ENCODE measurements at regions of chr3 and their contacts with region 1.

Region 1: DNA sequence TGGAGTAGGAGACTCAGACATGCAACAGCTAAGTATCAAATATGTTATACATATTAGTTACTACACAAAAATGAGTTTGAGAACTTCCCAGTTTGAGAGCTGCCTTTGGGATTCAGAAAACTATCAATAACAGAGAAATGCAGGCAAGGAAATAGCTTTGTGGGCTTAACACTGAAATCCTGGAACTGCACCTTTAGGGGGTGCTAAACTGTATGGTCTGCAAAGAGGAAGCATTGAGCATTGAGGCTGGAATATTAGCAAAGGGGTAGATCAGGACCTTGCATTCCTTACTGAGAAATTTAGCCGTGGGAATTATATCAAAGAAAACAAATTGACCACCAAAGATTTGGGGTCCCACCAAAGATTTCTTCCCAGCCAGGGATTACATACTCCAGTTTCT is 580.0 kb downstream of the ZNF385D start:
- DNase-seq: peak in 1 of 2 experiments; percentile 1
- H3K4me3 ChIP-seq: no peak overlapping the region
- H3K27ac ChIP-seq: no peak overlapping the region
- H3K4me1 ChIP-seq: peaks cover 0 to 3% (median 0%) of the 10 kb centered on the region in 4 experiments; a peak in 1 of 7 replicates
- H3K27me3 ChIP-seq: no peaks in the 10 kb centered on the region
- CTCF ChIP-seq: peak in 2 of 3 experiments; percentile 42 to 76; a peak in 3 of 4 replicates
- EP300 ChIP-seq: no peak
- POLR2A ChIP-seq: no peak
- RAD21 ChIP-seq: peak in 1 of 2 experiments; percentile 56; a peak in 2 of 4 replicates

Region 2: DNA sequence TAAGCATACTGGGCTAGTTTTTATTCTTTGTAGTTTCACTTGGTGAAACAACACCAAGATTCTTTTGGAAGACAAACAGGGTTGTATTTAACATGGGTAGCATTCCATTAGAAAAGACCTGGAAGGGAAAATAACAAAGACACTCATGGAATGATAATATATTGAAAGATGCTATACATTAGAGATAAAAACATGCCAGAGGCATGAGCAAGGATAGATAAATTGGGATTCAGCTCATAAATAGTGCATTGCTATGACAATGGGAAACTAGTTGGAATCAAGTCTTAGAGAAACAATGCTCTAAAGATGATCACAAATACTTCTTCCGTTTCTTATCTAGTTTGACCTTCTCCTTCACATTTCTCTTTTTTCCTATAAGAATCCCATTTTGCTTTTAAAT is 97.4 kb before region 1 on chr3:
- CTCF ChIA-PET with region 1: no interaction called
- POLR2A ChIA-PET with region 1: no interaction called
- DNase-seq: no peak
- H3K4me3 ChIP-seq: no peak overlapping the region
- H3K27ac ChIP-seq: no peak overlapping the region
- H3K4me1 ChIP-seq: no peaks in the 10 kb centered on the region
- H3K27me3 ChIP-seq: no peaks in the 10 kb centered on the region
- CTCF ChIP-seq: no peak
- EP300 ChIP-seq: no peak
- POLR2A ChIP-seq: no peak
- RAD21 ChIP-seq: no peak

Region 3: DNA sequence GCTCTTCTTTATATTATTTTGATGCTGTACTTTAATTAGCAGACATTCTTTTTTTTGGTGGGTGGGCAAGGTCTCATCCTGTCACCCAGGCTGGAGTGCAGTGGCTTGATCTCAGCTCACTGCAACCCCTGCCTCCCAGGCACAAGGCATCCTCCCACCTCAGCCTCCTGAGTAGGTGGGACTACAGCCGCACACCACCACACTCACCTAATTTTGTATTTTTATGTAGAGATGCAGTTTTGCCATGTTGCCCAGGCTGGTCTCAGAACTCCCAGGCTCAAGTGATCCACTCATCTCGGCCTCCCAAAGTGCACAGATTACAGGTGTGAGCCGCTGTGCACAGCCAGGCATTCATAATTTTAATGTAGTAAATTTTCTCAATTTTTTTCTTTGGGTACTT is 28.0 kb before region 1 on chr3:
- CTCF ChIA-PET with region 1: interaction called, 11 read pairs
- POLR2A ChIA-PET with region 1: no interaction called
- DNase-seq: no peak
- H3K4me3 ChIP-seq: no peak overlapping the region
- H3K27ac ChIP-seq: no peak overlapping the region
- H3K4me1 ChIP-seq: peaks cover 0 to 5% (median 2%) of the 10 kb centered on the region in 4 experiments; a peak in 3 of 7 replicates
- H3K27me3 ChIP-seq: no peaks in the 10 kb centered on the region
- CTCF ChIP-seq: no peak
- EP300 ChIP-seq: no peak
- POLR2A ChIP-seq: no peak
- RAD21 ChIP-seq: no peak

Region 4: GRCh38 chr3:21158861-21159542 is 12.0 kb before region 1 on chr3:
- CTCF ChIA-PET with region 1: interaction called, 23 read pairs
- POLR2A ChIA-PET with region 1: no interaction called
- DNase-seq: no peak
- H3K4me3 ChIP-seq: no peak overlapping the region
- H3K27ac ChIP-seq: no peak overlapping the region
- H3K4me1 ChIP-seq: no peaks in the 10 kb centered on the region
- H3K27me3 ChIP-seq: no peaks in the 10 kb centered on the region
- CTCF ChIP-seq: no peak
- EP300 ChIP-seq: no peak
- POLR2A ChIP-seq: no peak
- RAD21 ChIP-seq: no peak

Region 5: GRCh38 chr3:21185816-21186314 is 14.9 kb after region 1 on chr3:
- CTCF ChIA-PET with region 1: interaction called, 17 read pairs
- POLR2A ChIA-PET with region 1: no interaction called
- DNase-seq: no peak
- H3K4me3 ChIP-seq: no peak overlapping the region
- H3K27ac ChIP-seq: no peak overlapping the region
- H3K4me1 ChIP-seq: no peaks in the 10 kb centered on the region
- H3K27me3 ChIP-seq: no peaks in the 10 kb centered on the region
- CTCF ChIP-seq: no peak
- EP300 ChIP-seq: no peak
- POLR2A ChIP-seq: no peak
- RAD21 ChIP-seq: no peak

Measured in H1 (cell line).